Activated CD4-positive, alpha-beta T cell treated with anti-CD3 and anti-CD28 coated beads for 36 hours (primary cell): ENCODE measurements at regions of chr7 and their contacts with region 1.

Region 1: GRCh38 chr7:130010689-130011412 is 40.3 kb downstream of the ZC3HC1 start:
- DNase-seq: peak; percentile 94
- ATAC-seq: peak; percentile 85
- H3K4me3 Mint-ChIP-seq: no peak overlapping the region
- H3K27ac Mint-ChIP-seq: peak overlapping the region; percentile 88
- H3K4me1 Mint-ChIP-seq: peaks cover 12% of the 10 kb centered on the region
- H3K27me3 Mint-ChIP-seq: no peaks in the 10 kb centered on the region

Region 2: DNA sequence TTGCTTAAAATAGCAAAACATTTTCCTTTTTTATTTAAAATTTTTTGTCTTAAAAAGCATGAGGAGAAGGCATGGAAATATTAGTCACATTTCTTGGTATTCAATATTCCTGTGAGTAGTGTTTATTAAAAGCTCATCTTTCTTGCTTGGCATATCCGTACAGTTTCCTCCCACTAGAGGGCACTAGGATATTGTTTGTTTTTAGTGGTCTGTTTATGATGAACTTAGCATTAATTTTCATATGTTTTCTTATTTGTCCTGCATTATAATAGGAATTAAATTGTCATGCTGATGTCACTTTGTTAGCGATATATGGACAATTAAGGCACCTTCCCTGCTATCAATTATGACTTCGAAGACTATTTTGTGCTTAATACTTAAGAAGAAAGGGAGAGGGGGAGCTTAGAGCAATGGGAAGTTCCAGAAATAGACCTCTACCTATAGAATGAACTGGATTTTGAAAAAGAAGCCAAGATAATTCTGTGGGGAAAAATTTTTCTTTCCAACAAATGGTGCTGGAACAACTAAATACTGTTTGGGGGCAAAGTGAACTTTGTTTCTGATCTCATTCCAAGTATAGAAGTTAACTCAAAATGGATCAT is 667.7 kb before region 1 on chr7:
- CTCF ChIA-PET with region 1: interaction called, 3 read pairs
- POLR2A ChIA-PET with region 1: no interaction called
- intact Hi-C with region 1: loop called (anchors 2 to 10 kb)
- DNase-seq: peak; percentile 9
- ATAC-seq: peak; percentile 36
- H3K4me3 Mint-ChIP-seq: no peak overlapping the region
- H3K27ac Mint-ChIP-seq: no peak overlapping the region
- H3K4me1 Mint-ChIP-seq: peaks cover 29% of the 10 kb centered on the region
- H3K27me3 Mint-ChIP-seq: no peaks in the 10 kb centered on the region

Region 3: GRCh38 chr7:129611246-129612111 is 399.4 kb before region 1 on chr7 and contains the start of gene NRF1:
- CTCF ChIA-PET with region 1: interaction called, 4 read pairs
- POLR2A ChIA-PET with region 1: no interaction called
- intact Hi-C with region 1: loop called in 1 of 2 experiments (anchors 5 kb)
- DNase-seq: peak; percentile 96
- ATAC-seq: peak; percentile 87
- H3K4me3 Mint-ChIP-seq: peak within 1 kb of the TSS; percentile 90
- H3K27ac Mint-ChIP-seq: peak within 1 kb of the TSS; percentile 96
- H3K4me1 Mint-ChIP-seq: peaks cover 61% of the 10 kb centered on the region
- H3K27me3 Mint-ChIP-seq: no peaks in the 10 kb centered on the region
- total RNA-seq, gene NRF1: 20.5 to 28.9 TPM

Region 4: GRCh38 chr7:129652914-129653313 is 357.9 kb before region 1 on chr7:
- CTCF ChIA-PET with region 1: no interaction called
- POLR2A ChIA-PET with region 1: no interaction called
- intact Hi-C with region 1: loop called in 1 of 2 experiments (anchors 5 kb)
- DNase-seq: peak; percentile 46
- ATAC-seq: peak; percentile 73
- H3K4me3 Mint-ChIP-seq: no peak overlapping the region
- H3K27ac Mint-ChIP-seq: no peak overlapping the region
- H3K4me1 Mint-ChIP-seq: peaks cover 51% of the 10 kb centered on the region
- H3K27me3 Mint-ChIP-seq: no peaks in the 10 kb centered on the region

Region 5: GRCh38 chr7:129780257-129780973 is 230.4 kb before region 1 on chr7:
- CTCF ChIA-PET with region 1: interaction called, 3 read pairs
- POLR2A ChIA-PET with region 1: no interaction called
- intact Hi-C with region 1: loop called in 1 of 2 experiments (anchors 5 kb)
- DNase-seq: peak; percentile 92
- ATAC-seq: peak; percentile 82
- H3K4me3 Mint-ChIP-seq: peak overlapping the region; percentile 66
- H3K27ac Mint-ChIP-seq: no peak overlapping the region
- H3K4me1 Mint-ChIP-seq: peaks cover 33% of the 10 kb centered on the region
- H3K27me3 Mint-ChIP-seq: peaks cover 58% of the 10 kb centered on the region

Region 6: DNA sequence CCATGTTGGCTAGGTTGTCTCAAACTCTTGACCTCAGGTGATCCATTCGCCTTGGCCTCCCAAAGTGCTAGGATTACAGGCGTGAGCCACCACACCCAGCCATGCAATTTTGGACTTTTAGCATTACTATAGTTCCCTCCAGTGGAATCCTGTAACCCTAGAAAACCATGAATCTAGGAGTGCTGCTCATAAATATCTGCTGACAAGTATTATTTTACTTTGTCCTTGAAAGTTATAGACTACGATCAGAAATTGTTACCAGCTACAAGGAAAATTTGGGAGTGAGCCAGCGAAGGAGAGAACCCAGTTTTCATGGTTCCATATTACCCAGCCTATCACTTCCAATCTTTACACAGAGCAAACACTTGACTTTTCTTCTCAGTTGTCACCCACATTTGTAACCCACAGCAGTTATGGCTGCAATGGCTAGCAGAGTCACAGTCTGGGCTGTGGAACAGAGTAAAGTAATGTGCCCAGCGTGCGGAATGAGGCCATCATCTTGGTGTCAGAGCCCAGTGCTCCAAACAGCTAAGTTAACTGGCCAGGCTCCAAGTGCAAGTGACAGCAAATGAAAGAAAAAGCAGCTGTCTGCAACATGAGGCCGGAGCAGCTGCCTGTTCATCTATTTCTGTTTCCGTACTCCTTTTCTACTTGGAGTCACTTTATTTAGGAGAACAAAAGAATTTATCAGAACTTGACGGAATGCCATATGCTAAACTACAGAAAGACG is 10.4 kb after region 1 on chr7:
- CTCF ChIA-PET with region 1: interaction called, 16 read pairs
- POLR2A ChIA-PET with region 1: no interaction called
- intact Hi-C with region 1: no loop called
- DNase-seq: no peak
- ATAC-seq: no peak
- H3K4me3 Mint-ChIP-seq: no peak overlapping the region
- H3K27ac Mint-ChIP-seq: no peak overlapping the region
- H3K4me1 Mint-ChIP-seq: no peaks in the 10 kb centered on the region
- H3K27me3 Mint-ChIP-seq: no peaks in the 10 kb centered on the region